Heart left ventricle (tissue), 16 donors: ENCODE measurements at regions of chr2 and their contacts with region 1.

Region 1: GRCh38 chr2:27050281-27050995 is 1.0 kb upstream of the AGBL5 start:
- DNase-seq: peak; percentile 80 to 94 (median 87)
- ATAC-seq: peak; percentile 81 to 90 (median 86)
- H3K4me3 ChIP-seq: peak overlapping the region; percentile 73 to 97 (median 91)
- H3K27ac ChIP-seq: peak overlapping the region; percentile 47 to 95 (median 90)
- H3K4me1 ChIP-seq: peaks cover 0 to 25% (median 12%) of the 10 kb centered on the region in 12 donors
- H3K27me3 ChIP-seq: no peaks in the 10 kb centered on the region
- CTCF ChIP-seq: peak in 11 of 12 donors; percentile 8 to 60 (median 38)
- POLR2A ChIP-seq: no peak

Region 2: DNA sequence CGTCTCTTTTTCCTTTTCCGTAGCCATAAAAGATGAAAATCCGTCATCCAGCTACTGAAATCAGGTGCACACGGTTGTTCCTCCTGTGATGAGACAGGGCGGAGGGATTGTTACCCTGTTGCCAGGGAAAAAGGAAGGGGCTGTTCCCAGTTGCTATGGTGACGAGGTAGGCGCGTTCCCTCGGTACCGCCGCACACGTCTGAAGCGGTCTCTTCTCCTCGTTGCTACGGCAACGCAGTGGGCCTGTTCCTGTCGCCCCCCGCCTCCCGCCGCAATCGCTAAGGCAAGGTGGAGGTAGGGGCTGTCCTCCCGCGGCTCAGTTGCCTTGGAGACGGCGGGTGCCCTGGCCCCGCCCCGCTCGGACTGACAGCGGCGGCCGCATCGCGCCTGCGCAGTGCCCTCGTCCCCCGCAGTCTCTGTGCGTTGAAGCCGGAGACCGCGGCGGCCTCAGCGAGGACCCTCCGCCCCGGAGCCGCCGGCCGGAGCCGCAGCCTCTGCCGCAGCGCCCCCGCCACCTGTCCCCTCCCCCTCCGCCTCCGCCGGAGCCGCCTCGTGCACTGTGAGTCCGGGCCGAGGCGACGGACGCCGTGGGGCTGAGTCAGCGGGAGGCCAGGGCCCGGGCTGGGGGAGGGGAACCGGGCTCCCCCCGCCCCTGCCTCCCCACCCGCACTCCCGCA is 80.1 kb before region 1 on chr2 and contains the start of gene MAPRE3:
- intact Hi-C with region 1: loop called in 1 of 10 experiments (anchors 1 kb)
- DNase-seq: peak; percentile 79 to 93 (median 84)
- ATAC-seq: peak; percentile 76 to 97 (median 93)
- H3K4me3 ChIP-seq: peak within 1 kb of the TSS; percentile 64 to 96 (median 84)
- H3K27ac ChIP-seq: peak within 1 kb of the TSS in 11 of 12 donors; percentile 58 to 86 (median 72)
- H3K4me1 ChIP-seq: peaks cover 0 to 33% (median 22%) of the 10 kb centered on the region in 12 donors
- H3K27me3 ChIP-seq: no peaks in the 10 kb centered on the region
- CTCF ChIP-seq: no peak
- POLR2A ChIP-seq: peak in 1 of 2 donors; percentile 34
- total RNA-seq, gene MAPRE3: 27.4 to 55.2 (median 42.3) TPM

Region 3: GRCh38 chr2:27032495-27033252 is 17.8 kb before region 1 on chr2 and contains the start of gene TMEM214:
- intact Hi-C with region 1: loop called in 2 of 10 experiments (anchors 1 kb)
- DNase-seq: peak; percentile 91 to 96 (median 92)
- ATAC-seq: peak; percentile 93 to 99 (median 98)
- H3K4me3 ChIP-seq: peak within 1 kb of the TSS; percentile 76 to 99 (median 94)
- H3K27ac ChIP-seq: peak within 1 kb of the TSS; percentile 59 to 92 (median 85)
- H3K4me1 ChIP-seq: peaks cover 0 to 29% (median 17%) of the 10 kb centered on the region in 12 donors
- H3K27me3 ChIP-seq: no peaks in the 10 kb centered on the region
- CTCF ChIP-seq: peak in 2 of 12 donors; percentile 12 to 16
- POLR2A ChIP-seq: peak in 1 of 2 donors; percentile 86
- total RNA-seq, gene TMEM214: 18.3 to 58.0 (median 31.6) TPM

Region 4: GRCh38 chr2:27071277-27071989 is 21.0 kb after region 1 on chr2 and contains the start of gene OST4:
- intact Hi-C with region 1: loop called in 4 of 10 experiments (anchors 1 to 2 kb)
- DNase-seq: peak; percentile 95 to 97 (median 96)
- ATAC-seq: peak; percentile 77 to 95 (median 92)
- H3K4me3 ChIP-seq: peak within 1 kb of the TSS; percentile 55 to 99 (median 89)
- H3K27ac ChIP-seq: peak within 1 kb of the TSS; percentile 62 to 99 (median 96)
- H3K4me1 ChIP-seq: peaks cover 3 to 72% (median 48%) of the 10 kb centered on the region in 12 donors
- H3K27me3 ChIP-seq: no peaks in the 10 kb centered on the region
- CTCF ChIP-seq: peak in 2 of 12 donors; percentile 30 to 40
- POLR2A ChIP-seq: peak in 1 of 2 donors; percentile 77
- total RNA-seq, gene OST4: 215 to 466 (median 343) TPM

Region 5: DNA sequence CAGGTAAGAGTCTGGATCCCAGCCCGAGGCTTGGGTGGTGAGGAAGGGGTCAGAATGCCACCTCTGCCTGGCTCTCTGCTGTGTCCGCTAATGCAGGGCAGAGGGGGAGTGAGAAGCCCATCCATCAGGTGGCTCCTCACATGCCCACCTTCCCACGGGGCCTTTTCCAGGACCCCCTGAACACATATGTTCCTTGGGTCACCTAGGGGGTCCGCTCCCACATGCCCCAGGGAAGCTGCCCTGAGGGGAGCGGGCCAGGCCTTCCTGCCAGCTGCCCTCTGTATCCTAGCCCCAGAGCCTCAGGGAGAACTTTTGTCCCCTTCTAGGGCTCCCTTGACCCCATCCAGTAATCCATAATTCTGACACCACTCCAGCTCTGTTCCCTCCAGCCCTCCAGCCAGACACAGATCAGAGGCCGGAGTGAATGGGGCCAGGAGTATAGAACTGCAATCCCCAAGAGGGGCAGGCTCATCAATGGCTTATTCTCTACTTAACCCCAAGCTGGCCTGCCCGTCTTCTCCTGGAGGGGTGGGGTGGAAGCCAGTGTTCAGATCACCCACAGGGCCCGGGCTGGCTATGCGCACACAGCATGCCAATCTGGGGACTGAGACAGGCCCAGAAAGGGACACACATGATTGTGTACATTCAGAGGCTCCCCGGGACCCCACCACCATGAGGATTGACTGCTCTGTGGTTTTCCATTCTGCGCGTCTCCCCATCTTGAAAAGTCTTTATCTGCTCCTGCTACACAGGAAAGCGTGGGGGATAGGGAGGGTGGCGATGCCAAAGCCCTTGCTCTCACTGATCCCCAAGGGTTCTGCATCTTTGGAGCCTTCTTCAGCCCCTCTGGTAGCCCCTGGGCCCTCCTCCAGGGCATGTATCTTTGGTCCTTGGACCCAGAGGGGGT is 29.0 kb after region 1 on chr2:
- intact Hi-C with region 1: loop called in 2 of 10 experiments (anchors 2 kb)
- DNase-seq: peak in 1 of 5 donors; percentile 37
- ATAC-seq: no peak
- H3K4me3 ChIP-seq: peak overlapping the region; percentile 41 to 74 (median 54)
- H3K27ac ChIP-seq: peak overlapping the region; percentile 69 to 97 (median 86)
- H3K4me1 ChIP-seq: peaks cover 0 to 65% (median 31%) of the 10 kb centered on the region in 12 donors
- H3K27me3 ChIP-seq: no peaks in the 10 kb centered on the region
- CTCF ChIP-seq: no peak
- POLR2A ChIP-seq: no peak

Region 6: GRCh38 chr2:27086090-27086723 is 35.8 kb after region 1 on chr2:
- intact Hi-C with region 1: loop called in 6 of 10 experiments (anchors 1 to 5 kb)
- DNase-seq: peak; percentile 94 to 98 (median 96)
- ATAC-seq: peak; percentile 79 to 90 (median 88)
- H3K4me3 ChIP-seq: peak overlapping the region; percentile 54 to 88 (median 74)
- H3K27ac ChIP-seq: peak overlapping the region; percentile 78 to 96 (median 94)
- H3K4me1 ChIP-seq: peaks cover 4 to 46% (median 28%) of the 10 kb centered on the region in 12 donors
- H3K27me3 ChIP-seq: no peaks in the 10 kb centered on the region
- CTCF ChIP-seq: peak; percentile 75 to 96 (median 94)
- POLR2A ChIP-seq: peak in 1 of 2 donors; percentile 69

Region 7: GRCh38 chr2:27194538-27195354 is 144.3 kb after region 1 on chr2:
- intact Hi-C with region 1: no loop called
- DNase-seq: no peak
- ATAC-seq: no peak
- H3K4me3 ChIP-seq: no peak overlapping the region
- H3K27ac ChIP-seq: no peak overlapping the region
- H3K4me1 ChIP-seq: no peaks in the 10 kb centered on the region
- H3K27me3 ChIP-seq: no peaks in the 10 kb centered on the region
- CTCF ChIP-seq: no peak
- POLR2A ChIP-seq: no peak